ENCODE measurements at regions of chr11 and their contacts with region 1.

Region 1: DNA sequence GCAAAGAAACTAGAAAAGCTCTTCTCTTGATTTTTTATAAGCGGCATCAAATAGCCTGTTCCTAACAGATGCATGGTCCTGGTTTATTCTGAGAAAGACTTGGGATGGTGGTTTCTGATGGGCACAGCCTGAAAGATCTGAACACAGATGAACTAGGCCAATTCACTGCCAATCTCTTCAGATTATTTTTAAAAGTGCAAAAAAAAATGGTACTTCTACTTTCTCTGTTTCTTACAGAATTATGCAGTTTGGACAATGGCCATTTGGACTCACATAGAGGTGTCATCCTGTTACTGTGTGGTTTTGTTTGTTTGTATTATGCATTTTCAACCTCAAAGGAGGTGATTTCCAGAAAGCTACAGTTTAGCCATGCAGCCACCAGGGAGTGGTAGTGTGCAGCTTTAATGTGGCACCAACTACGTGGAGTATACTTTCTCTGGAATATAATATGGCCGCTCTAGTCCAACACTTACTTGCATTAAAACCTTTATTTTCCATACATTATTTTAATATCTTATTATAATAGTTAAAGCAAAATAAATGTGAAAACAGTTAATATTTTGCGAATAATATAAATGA is 469.8 kb upstream of the KIRREL3 start:
- DNase-seq: no peak
- ATAC-seq: peak; percentile 84
- H3K4me3 ChIP-seq: no peak overlapping the region
- H3K27ac ChIP-seq: no peak overlapping the region
- H3K4me1 ChIP-seq: no peaks in the 10 kb centered on the region
- H3K27me3 ChIP-seq: no peaks in the 10 kb centered on the region
- CTCF ChIP-seq: peak; percentile 23 to 51 (median 25); a peak in 4 of 6 replicates
- EP300 ChIP-seq: no peak
- POLR2A ChIP-seq: no peak
- RAD21 ChIP-seq: peak; percentile 18; the same call in 1 of the 2 replicates

Region 2: DNA sequence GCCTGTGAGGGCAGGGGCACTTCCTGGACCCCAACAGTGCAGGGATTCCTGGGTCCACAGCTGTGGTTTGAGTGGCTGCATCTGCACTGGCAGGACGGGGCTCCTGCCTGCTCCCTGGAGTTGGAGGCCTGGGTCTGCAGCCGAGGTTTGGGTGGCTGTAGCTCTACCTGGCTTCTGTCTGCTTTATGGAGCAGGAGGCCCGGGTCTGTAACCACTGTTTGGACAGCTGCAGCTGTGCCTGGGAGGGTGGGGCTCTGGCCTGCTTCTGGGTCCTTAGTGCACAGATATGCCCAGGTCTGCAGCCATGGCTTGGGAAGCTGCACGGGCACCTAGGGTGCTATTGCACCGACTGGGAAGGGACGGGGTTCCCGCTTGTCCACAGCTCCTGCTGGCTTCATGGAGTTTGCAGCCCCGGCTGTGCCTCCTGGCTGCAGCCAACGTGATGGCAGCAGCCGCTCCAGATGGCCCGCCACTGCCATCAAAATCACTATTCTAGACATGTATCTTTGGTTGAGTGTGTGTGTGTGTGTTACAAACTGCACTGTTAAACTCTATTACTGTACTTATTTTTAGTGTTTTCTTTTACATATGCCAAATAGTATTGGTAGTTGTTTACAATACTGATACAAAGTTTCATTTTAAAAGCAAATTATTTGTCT is 57.5 kb before region 1 on chr11:
- CTCF ChIA-PET with region 1: no interaction called
- POLR2A ChIA-PET with region 1: no interaction called
- RAD21 ChIA-PET with region 1: no interaction called
- SMC1A ChIA-PET with region 1: no interaction called
- in situ Hi-C with region 1: no loop called
- intact Hi-C with region 1: loop called (anchors 10 kb)
- DNase-seq: no peak
- ATAC-seq: no peak
- H3K4me3 ChIP-seq: no peak overlapping the region
- H3K27ac ChIP-seq: no peak overlapping the region
- H3K4me1 ChIP-seq: no peaks in the 10 kb centered on the region
- H3K27me3 ChIP-seq: no peaks in the 10 kb centered on the region
- CTCF ChIP-seq: no peak
- EP300 ChIP-seq: no peak
- POLR2A ChIP-seq: no peak
- RAD21 ChIP-seq: no peak

Measured in GM12878 (cell line).